GM12878 (cell line): ENCODE measurements at regions of chr2 and their contacts with region 1.

Region 1: GRCh38 chr2:62787386-62787785 is 81.9 kb downstream of the EHBP1 start:
- DNase-seq: no peak
- ATAC-seq: peak; percentile 90
- H3K4me3 ChIP-seq: no peak overlapping the region
- H3K27ac ChIP-seq: no peak overlapping the region
- H3K4me1 ChIP-seq: no peaks in the 10 kb centered on the region
- H3K27me3 ChIP-seq: no peaks in the 10 kb centered on the region
- CTCF ChIP-seq: peak; percentile 39 to 66 (median 45); a peak in 4 of 6 replicates
- EP300 ChIP-seq: no peak
- POLR2A ChIP-seq: no peak
- RAD21 ChIP-seq: peak; percentile 88

Region 2: GRCh38 chr2:62801814-62802523 is 14.6 kb after region 1 on chr2:
- CTCF ChIA-PET with region 1: interaction called, 6 read pairs
- POLR2A ChIA-PET with region 1: interaction called, 3 read pairs
- RAD21 ChIA-PET with region 1: interaction called, 6 read pairs
- SMC1A ChIA-PET with region 1: interaction called, 18 read pairs
- in situ Hi-C with region 1: no loop called
- intact Hi-C with region 1: no loop called
- DNase-seq: no peak
- ATAC-seq: peak; percentile 78
- H3K4me3 ChIP-seq: no peak overlapping the region
- H3K27ac ChIP-seq: peak overlapping the region; percentile 33; the same call in 1 of the 2 replicates
- H3K4me1 ChIP-seq: no peaks in the 10 kb centered on the region; the same call in 1 of the 2 replicates
- H3K27me3 ChIP-seq: no peaks in the 10 kb centered on the region
- CTCF ChIP-seq: peak in 2 of 3 experiments; percentile 15 to 24; a peak in 1 of 6 replicates
- EP300 ChIP-seq: no peak
- POLR2A ChIP-seq: no peak
- RAD21 ChIP-seq: no peak

Region 3: GRCh38 chr2:62858356-62858755 is 71.0 kb after region 1 on chr2:
- CTCF ChIA-PET with region 1: no interaction called
- POLR2A ChIA-PET with region 1: no interaction called
- RAD21 ChIA-PET with region 1: no interaction called
- SMC1A ChIA-PET with region 1: no interaction called
- in situ Hi-C with region 1: no loop called
- intact Hi-C with region 1: no loop called
- DNase-seq: no peak
- ATAC-seq: no peak
- H3K4me3 ChIP-seq: no peak overlapping the region
- H3K27ac ChIP-seq: no peak overlapping the region
- H3K4me1 ChIP-seq: no peaks in the 10 kb centered on the region
- H3K27me3 ChIP-seq: no peaks in the 10 kb centered on the region
- CTCF ChIP-seq: no peak
- EP300 ChIP-seq: no peak
- POLR2A ChIP-seq: no peak
- RAD21 ChIP-seq: no peak

Region 4: DNA sequence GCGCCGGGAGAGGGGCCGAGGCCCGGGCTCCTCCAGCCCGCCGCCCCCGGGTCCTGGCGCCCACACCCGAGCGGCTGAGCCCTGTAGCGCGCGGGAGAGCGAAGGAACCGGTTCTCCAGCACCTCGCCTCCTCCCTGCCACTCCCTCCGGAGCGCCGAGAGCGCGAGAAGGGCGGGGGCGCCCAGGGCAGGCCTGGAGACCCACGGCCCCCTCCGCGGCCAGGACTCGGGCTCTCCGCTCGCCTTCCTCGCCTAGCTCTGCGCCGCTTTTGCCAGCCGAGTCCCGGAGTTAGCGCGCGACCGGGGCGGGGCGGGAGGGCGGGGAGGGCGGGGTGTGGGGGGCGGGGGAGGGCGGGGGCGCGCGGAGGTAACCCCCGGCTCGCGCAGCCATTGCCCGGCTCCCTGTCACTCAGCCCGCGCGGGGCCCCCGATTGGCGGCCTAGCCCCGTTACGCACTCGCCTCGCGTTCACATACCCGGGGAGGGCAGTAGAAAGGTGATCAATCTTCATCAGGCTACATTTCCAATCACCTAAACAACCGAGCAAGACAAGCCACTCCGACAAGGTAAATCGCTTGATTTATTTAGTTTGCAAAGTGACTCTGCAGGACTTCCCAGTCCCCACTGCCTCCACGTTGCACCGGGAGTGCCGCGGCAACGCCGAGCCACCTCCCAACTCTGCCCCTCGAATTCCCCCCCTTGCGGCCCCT is 263.1 kb after region 1 on chr2 and contains the start of gene OTX1:
- CTCF ChIA-PET with region 1: interaction called, 7 read pairs
- POLR2A ChIA-PET with region 1: no interaction called
- RAD21 ChIA-PET with region 1: interaction called, 3 read pairs
- SMC1A ChIA-PET with region 1: interaction called, 5 read pairs
- in situ Hi-C with region 1: no loop called
- intact Hi-C with region 1: loop called (anchors 10 kb)
- DNase-seq: peak; percentile 41
- ATAC-seq: peak; percentile 92
- H3K4me3 ChIP-seq: peak within 1 kb of the TSS; percentile 83
- H3K27ac ChIP-seq: no peak within 1 kb of the TSS
- H3K4me1 ChIP-seq: peaks cover 8% of the 10 kb centered on the region
- H3K27me3 ChIP-seq: peaks cover 0 to 28% of the 10 kb centered on the region in 2 experiments; a peak in 3 of 4 replicates
- CTCF ChIP-seq: no peak
- EP300 ChIP-seq: no peak
- POLR2A ChIP-seq: peak; percentile 78
- RAD21 ChIP-seq: no peak
- polyA plus RNA-seq, gene OTX1: 0.04 TPM in 1 of 2 experiments, not detected in the other

Region 5: GRCh38 chr2:63488118-63488713 is 700.8 kb after region 1 on chr2:
- CTCF ChIA-PET with region 1: interaction called, 47 read pairs
- POLR2A ChIA-PET with region 1: no interaction called
- RAD21 ChIA-PET with region 1: interaction called, 6 read pairs
- SMC1A ChIA-PET with region 1: interaction called, 7 read pairs
- in situ Hi-C with region 1: loop called (anchors 10 kb)
- intact Hi-C with region 1: loop called (anchors 5 kb)
- DNase-seq: no peak
- ATAC-seq: peak; percentile 66
- H3K4me3 ChIP-seq: no peak overlapping the region
- H3K27ac ChIP-seq: no peak overlapping the region
- H3K4me1 ChIP-seq: no peaks in the 10 kb centered on the region
- H3K27me3 ChIP-seq: no peaks in the 10 kb centered on the region
- CTCF ChIP-seq: peak; percentile 54 to 68 (median 61)
- EP300 ChIP-seq: no peak
- POLR2A ChIP-seq: no peak
- RAD21 ChIP-seq: peak; percentile 64